ENCODE measurements at regions of chr1 and their contacts with region 1.

Region 1: GRCh38 chr1:57424231-57425027 is 569 bp upstream of the DAB1 start:
- DNase-seq: peak; percentile 92
- H3K4me3 ChIP-seq: peak overlapping the region; percentile 91
- H3K27ac ChIP-seq: peak overlapping the region; percentile 88
- H3K4me1 ChIP-seq: peaks cover 26% of the 10 kb centered on the region
- H3K27me3 ChIP-seq: no peaks in the 10 kb centered on the region
- CTCF ChIP-seq: peak; percentile 96

Region 2: GRCh38 chr1:57218487-57219079 is 205.8 kb before region 1 on chr1:
- CTCF ChIA-PET with region 1: no interaction called
- POLR2A ChIA-PET with region 1: no interaction called
- intact Hi-C with region 1: loop called (anchors 5 kb)
- DNase-seq: no peak
- H3K4me3 ChIP-seq: no peak overlapping the region
- H3K27ac ChIP-seq: no peak overlapping the region
- H3K4me1 ChIP-seq: peaks cover 31% of the 10 kb centered on the region
- H3K27me3 ChIP-seq: no peaks in the 10 kb centered on the region
- CTCF ChIP-seq: no peak

Region 3: DNA sequence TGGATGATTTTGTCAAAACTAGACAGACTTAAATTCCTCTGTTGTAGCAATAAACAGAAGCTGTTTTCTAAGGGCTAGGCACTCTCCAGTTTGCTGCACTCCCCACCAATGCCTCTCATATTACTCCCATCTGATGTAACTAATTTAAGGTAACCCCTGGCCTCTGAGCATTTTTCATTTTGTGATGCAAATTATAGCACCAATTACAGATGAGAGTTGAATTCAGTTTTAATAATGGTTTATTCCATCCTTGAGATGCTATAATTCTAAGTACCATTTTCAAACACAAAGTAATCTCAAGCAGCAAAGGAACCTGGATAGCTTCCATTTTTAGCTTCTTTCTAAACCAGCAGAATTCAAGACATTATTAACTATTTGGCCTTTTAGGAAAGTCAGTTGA is 279.8 kb after region 1 on chr1:
- CTCF ChIA-PET with region 1: interaction called, 6 read pairs
- POLR2A ChIA-PET with region 1: interaction called, 8 read pairs
- intact Hi-C with region 1: loop called (anchors 1 kb)
- DNase-seq: peak; percentile 95
- H3K4me3 ChIP-seq: no peak overlapping the region
- H3K27ac ChIP-seq: peak overlapping the region; percentile 98
- H3K4me1 ChIP-seq: peaks cover 63% of the 10 kb centered on the region
- H3K27me3 ChIP-seq: no peaks in the 10 kb centered on the region
- CTCF ChIP-seq: no peak

Region 4: GRCh38 chr1:58155418-58156123 is 731.1 kb after region 1 on chr1:
- CTCF ChIA-PET with region 1: no interaction called
- POLR2A ChIA-PET with region 1: no interaction called
- intact Hi-C with region 1: loop called (anchors 5 kb)
- DNase-seq: peak; percentile 65
- H3K4me3 ChIP-seq: no peak overlapping the region
- H3K27ac ChIP-seq: no peak overlapping the region
- H3K4me1 ChIP-seq: peaks cover 30% of the 10 kb centered on the region
- H3K27me3 ChIP-seq: no peaks in the 10 kb centered on the region
- CTCF ChIP-seq: peak; percentile 86